WTC11 (cell line): ENCODE measurements at regions of chr10 and their contacts with region 1.

Region 1: GRCh38 chr10:25875556-25876165 is 58.4 kb upstream of the MYO3A start:
- DNase-seq: peak; percentile 85
- ATAC-seq: peak; percentile 88
- H3K4me3 Mint-ChIP-seq: no peak overlapping the region
- H3K27ac Mint-ChIP-seq: no peak overlapping the region
- H3K4me1 Mint-ChIP-seq: no peaks in the 10 kb centered on the region
- H3K27me3 Mint-ChIP-seq: no peaks in the 10 kb centered on the region; the same call in 1 of the 2 replicates
- CTCF ChIP-seq: peak; percentile 85

Region 2: DNA sequence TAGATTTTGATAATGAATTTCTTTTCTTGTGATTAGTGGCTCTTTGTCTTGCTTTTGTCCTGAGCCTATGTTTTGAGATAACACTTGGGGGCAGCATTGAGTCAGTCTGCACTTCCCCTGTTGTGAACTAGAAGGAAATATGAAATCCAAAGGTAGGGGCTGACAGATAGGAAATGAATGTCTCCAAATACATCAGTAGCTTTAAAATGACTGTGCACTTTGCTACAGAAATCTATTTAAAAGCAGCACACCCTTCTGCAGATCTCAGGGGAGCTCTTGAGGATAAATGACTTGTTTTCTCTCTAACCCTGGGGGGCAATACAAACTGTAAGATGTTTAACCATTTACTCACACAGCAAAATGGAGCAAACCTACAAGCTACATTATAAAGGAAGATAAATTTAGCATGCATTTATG is 117.6 kb before region 1 on chr10:
- CTCF ChIA-PET with region 1: interaction called, 15 read pairs
- POLR2A ChIA-PET with region 1: no interaction called
- DNase-seq: peak; percentile 45
- ATAC-seq: peak; percentile 77
- H3K4me3 Mint-ChIP-seq: no peak overlapping the region
- H3K27ac Mint-ChIP-seq: no peak overlapping the region
- H3K4me1 Mint-ChIP-seq: peaks cover 26% of the 10 kb centered on the region
- H3K27me3 Mint-ChIP-seq: no peaks in the 10 kb centered on the region
- CTCF ChIP-seq: peak; percentile 61

Region 3: GRCh38 chr10:25934621-25935139 is 59.0 kb after region 1 on chr10:
- CTCF ChIA-PET with region 1: interaction called, 15 read pairs
- POLR2A ChIA-PET with region 1: no interaction called
- DNase-seq: peak; percentile 57
- ATAC-seq: peak; percentile 53
- H3K4me3 Mint-ChIP-seq: peak overlapping the region; percentile 95
- H3K27ac Mint-ChIP-seq: peak overlapping the region; percentile 88
- H3K4me1 Mint-ChIP-seq: peaks cover 11% of the 10 kb centered on the region
- H3K27me3 Mint-ChIP-seq: peaks cover 20% of the 10 kb centered on the region
- CTCF ChIP-seq: no peak

Region 4: DNA sequence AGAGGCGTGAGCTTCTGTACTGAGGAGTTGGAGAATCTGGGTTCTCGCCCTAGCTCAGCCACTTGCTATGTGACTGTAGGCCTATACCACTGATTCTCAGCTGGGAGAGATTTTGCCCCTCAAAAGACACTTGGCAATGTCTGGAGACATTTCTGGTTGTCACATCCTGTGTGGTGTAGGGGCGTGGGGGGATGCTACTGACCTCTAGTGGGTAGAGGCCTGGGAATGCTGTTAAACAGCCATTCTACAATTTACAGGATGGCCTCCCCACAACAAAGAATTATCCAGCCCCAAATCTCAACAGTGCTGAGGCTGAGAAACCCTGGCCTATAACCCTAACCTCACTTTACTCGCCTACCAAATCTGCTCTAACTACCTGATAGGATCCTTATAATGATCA is 282.1 kb after region 1 on chr10:
- CTCF ChIA-PET with region 1: interaction called, 11 read pairs
- POLR2A ChIA-PET with region 1: no interaction called
- DNase-seq: peak; percentile 25
- ATAC-seq: peak; percentile 87
- H3K4me3 Mint-ChIP-seq: no peak overlapping the region
- H3K27ac Mint-ChIP-seq: no peak overlapping the region
- H3K4me1 Mint-ChIP-seq: peaks cover 7% of the 10 kb centered on the region
- H3K27me3 Mint-ChIP-seq: no peaks in the 10 kb centered on the region
- CTCF ChIP-seq: no peak

Region 5: DNA sequence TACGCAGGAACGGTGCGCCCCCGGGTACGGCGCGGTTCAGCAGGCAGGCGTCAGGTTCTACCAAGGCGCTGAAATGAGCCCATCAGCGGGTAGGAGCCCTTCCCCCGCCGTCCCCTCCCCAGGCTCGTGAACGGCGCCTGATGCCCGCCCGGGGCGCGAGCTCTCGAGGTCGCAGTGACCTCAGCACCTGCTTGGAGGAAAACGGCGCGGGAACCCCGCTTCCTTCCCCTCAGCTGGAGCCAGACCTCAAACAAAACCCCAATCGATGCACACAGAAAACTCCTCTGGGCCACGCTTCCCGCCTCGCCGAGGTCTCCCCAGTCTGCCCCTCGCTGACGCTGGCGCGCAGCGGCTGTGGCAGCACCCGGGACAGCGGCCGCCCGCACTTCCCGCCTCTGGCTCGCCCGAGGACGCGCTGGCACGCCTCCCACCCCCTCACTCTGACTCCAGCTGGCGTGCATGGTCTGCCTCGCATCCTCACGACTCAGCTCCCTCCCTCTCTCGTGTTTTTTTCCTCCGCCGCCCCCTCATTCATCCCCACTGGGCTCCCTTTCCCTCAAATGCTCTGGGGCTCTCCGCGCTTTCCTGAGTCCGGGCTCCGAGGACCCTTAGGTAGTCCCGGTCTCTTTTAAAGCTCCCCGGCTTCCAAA is 340.4 kb after region 1 on chr10:
- CTCF ChIA-PET with region 1: interaction called, 10 read pairs
- POLR2A ChIA-PET with region 1: no interaction called
- DNase-seq: peak; percentile 77
- ATAC-seq: peak; percentile 46
- H3K4me3 Mint-ChIP-seq: peak overlapping the region; percentile 76
- H3K27ac Mint-ChIP-seq: no peak overlapping the region
- H3K4me1 Mint-ChIP-seq: peaks cover 62% of the 10 kb centered on the region
- H3K27me3 Mint-ChIP-seq: peaks cover 65% of the 10 kb centered on the region
- CTCF ChIP-seq: no peak

Region 6: GRCh38 chr10:26242706-26243350 is 367.2 kb after region 1 on chr10:
- CTCF ChIA-PET with region 1: interaction called, 10 read pairs
- POLR2A ChIA-PET with region 1: no interaction called
- DNase-seq: no peak
- ATAC-seq: peak; percentile 79
- H3K4me3 Mint-ChIP-seq: no peak overlapping the region
- H3K27ac Mint-ChIP-seq: no peak overlapping the region
- H3K4me1 Mint-ChIP-seq: peaks cover 18% of the 10 kb centered on the region
- H3K27me3 Mint-ChIP-seq: peaks cover 2% of the 10 kb centered on the region; the same call in 1 of the 2 replicates
- CTCF ChIP-seq: no peak

Region 7: DNA sequence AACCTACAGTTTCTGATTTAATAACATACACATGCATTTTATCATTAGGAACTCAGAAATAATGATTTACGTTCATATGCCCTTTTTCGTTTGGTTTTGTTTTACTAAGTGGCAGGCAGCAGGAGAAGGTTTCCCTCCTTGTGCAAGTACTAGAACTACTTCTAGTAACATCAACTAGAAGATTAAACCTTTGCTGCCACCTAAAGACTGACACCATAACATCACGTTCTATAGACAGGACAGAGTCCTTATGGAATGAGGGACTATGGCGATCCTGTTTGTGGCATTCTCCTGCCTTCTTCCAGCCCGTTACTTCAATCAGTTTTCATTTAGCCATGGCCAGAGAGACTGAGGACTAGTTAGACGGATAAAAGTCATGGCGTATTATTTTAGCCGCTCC is 394.1 kb after region 1 on chr10:
- CTCF ChIA-PET with region 1: interaction called, 19 read pairs
- POLR2A ChIA-PET with region 1: no interaction called
- DNase-seq: no peak
- ATAC-seq: peak; percentile 98
- H3K4me3 Mint-ChIP-seq: no peak overlapping the region
- H3K27ac Mint-ChIP-seq: no peak overlapping the region
- H3K4me1 Mint-ChIP-seq: peaks cover 19% of the 10 kb centered on the region
- H3K27me3 Mint-ChIP-seq: no peaks in the 10 kb centered on the region
- CTCF ChIP-seq: no peak